ENCODE measurements at regions of chr12 and their contacts with region 1.

Region 1: DNA sequence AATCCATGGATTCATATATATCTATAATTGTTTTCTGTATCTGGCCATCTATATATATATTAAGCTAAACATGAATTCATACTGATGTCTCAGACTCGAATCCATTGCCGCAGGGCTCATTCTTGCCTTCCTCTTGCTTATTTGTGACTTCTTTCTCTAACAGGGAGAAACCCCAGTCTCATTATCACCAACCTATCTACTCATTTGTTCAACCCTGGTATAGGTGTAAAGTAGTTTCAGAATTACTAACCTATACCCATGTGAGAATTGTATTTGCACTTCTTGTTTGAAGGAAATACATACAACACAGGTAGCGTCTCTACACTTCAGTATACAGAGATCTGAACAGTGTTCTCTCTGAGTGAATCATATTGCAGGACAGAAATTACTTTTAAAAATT is 77.7 kb downstream of the PTPN11 start:
- DNase-seq: peak; percentile 60
- H3K4me3 Mint-ChIP-seq: no peak overlapping the region
- H3K27ac Mint-ChIP-seq: peak overlapping the region; percentile 22
- H3K4me1 Mint-ChIP-seq: peaks cover 23% of the 10 kb centered on the region
- H3K27me3 Mint-ChIP-seq: no peaks in the 10 kb centered on the region

Region 2: GRCh38 chr12:112418608-112419298 is 77.7 kb before region 1 on chr12 and contains the start of gene PTPN11:
- CTCF ChIA-PET with region 1: no interaction called
- intact Hi-C with region 1: loop called (anchors 2 kb)
- DNase-seq: peak; percentile 90
- H3K4me3 Mint-ChIP-seq: peak within 1 kb of the TSS; percentile 95
- H3K27ac Mint-ChIP-seq: peak within 1 kb of the TSS; percentile 98
- H3K4me1 Mint-ChIP-seq: peaks cover 38% of the 10 kb centered on the region
- H3K27me3 Mint-ChIP-seq: no peaks in the 10 kb centered on the region
- total RNA-seq, gene PTPN11: 137 to 141 TPM

Region 3: GRCh38 chr12:112430929-112431328 is 65.6 kb before region 1 on chr12:
- CTCF ChIA-PET with region 1: no interaction called
- intact Hi-C with region 1: loop called (anchors 2 kb)
- DNase-seq: peak; percentile 62
- H3K4me3 Mint-ChIP-seq: peak overlapping the region; percentile 7
- H3K27ac Mint-ChIP-seq: peak overlapping the region; percentile 83
- H3K4me1 Mint-ChIP-seq: peaks cover 46% of the 10 kb centered on the region
- H3K27me3 Mint-ChIP-seq: no peaks in the 10 kb centered on the region

Region 4: GRCh38 chr12:112676526-112676925 is 180.0 kb after region 1 on chr12:
- CTCF ChIA-PET with region 1: no interaction called
- intact Hi-C with region 1: no loop called
- DNase-seq: no peak
- H3K4me3 Mint-ChIP-seq: no peak overlapping the region
- H3K27ac Mint-ChIP-seq: no peak overlapping the region
- H3K4me1 Mint-ChIP-seq: no peaks in the 10 kb centered on the region
- H3K27me3 Mint-ChIP-seq: peaks cover 10% of the 10 kb centered on the region

Region 5: DNA sequence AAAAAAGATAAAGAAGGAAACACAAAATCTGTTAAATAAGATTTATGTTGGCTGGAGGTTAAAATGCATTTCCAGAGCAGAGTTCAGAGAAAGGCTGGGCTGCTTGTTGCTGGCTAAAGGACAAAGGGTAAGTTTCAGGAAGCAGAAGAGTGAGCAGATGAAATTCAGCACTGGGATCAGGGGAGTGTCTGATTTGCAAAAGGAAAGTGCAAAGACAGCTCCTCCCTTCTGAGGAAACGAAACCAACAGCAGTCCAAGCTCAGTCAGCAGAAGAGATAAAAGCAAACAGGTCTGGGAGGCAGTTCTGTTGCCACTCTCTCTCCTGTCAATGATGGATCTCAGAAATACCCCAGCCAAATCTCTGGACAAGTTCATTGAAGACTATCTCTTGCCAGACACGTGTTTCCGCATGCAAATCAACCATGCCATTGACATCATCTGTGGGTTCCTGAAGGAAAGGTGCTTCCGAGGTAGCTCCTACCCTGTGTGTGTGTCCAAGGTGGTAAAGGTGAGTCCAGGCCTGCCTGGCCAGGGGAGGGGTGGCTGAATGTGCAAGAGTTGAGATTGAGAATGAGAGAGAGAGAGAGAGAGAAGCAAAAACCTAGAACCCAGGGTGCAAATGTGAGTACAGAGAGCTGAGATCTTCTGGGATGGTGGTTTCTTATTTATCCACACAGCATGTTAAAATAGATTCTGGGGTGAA is 410.4 kb after region 1 on chr12 and contains the start of gene OAS1:
- CTCF ChIA-PET with region 1: no interaction called
- intact Hi-C with region 1: loop called (anchors 5 kb)
- DNase-seq: peak; percentile 59
- H3K4me3 Mint-ChIP-seq: peak within 1 kb of the TSS; percentile 87
- H3K27ac Mint-ChIP-seq: peak within 1 kb of the TSS; percentile 81
- H3K4me1 Mint-ChIP-seq: peaks cover 62% of the 10 kb centered on the region
- H3K27me3 Mint-ChIP-seq: no peaks in the 10 kb centered on the region
- total RNA-seq, gene OAS1: 41.6 to 41.7 TPM